Mammary epithelial cell (primary cell): ENCODE measurements at regions of chr5 and their contacts with region 1.

Region 1: DNA sequence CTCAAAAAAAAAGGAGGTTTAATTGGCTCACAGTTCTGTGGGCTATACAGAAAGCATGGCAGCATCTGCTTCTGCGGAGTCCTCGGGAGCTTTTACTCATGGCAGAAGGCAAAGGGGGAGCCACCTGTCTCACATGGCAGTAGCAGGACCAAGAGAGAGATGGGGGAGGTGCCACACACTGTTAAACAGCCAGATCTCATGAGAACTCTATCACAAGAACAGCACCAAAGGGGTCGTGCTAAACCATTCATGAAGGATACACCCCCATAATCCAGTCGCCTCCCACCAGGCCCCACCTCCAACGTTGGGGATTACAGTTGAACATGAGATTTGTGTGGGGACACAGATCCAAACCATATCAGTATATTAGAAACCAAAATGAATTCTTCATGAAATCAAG is 28.3 kb upstream of the CXXC5 start:
- DNase-seq: no peak
- H3K4me3 ChIP-seq: no peak overlapping the region
- H3K27ac ChIP-seq: no peak overlapping the region
- H3K4me1 ChIP-seq: no peaks in the 10 kb centered on the region
- H3K27me3 ChIP-seq: no peaks in the 10 kb centered on the region
- CTCF ChIP-seq: no peak

Region 2: DNA sequence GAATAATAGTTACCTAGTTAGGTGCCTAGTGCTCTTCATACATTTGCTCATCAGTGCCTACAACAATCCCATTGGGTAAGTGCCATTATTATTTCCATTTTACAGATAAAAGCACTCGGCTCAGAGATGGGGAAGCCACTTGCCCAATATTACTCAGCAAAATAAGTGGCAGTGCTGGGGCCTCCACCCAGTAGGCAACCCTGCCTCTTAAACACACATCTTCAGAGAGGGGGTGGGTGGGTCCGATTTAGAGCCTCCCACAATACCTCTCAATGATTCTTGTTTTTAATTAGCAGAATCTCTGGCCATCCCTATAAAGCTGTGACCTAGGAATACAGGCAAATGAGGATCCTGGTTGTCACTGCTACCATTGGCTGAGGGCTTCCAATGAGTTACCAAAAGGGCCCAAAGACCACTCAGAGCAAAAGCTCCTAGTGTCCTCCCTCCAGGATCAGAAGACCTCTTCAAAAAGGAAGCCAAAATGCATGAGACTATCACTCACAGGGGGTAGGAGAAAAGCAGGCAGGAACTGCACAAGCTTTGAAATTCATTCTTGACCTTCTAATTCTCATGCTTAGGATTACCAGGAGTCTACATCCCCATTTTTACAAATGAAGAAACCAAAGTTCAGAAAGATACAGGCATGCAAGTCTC is 94.8 kb before region 1 on chr5:
- CTCF ChIA-PET with region 1: no interaction called
- dilution Hi-C with region 1: loop called (anchors 10 kb)
- in situ Hi-C with region 1: no loop called
- intact Hi-C with region 1: no loop called
- DNase-seq: no peak
- H3K4me3 ChIP-seq: no peak overlapping the region
- H3K27ac ChIP-seq: no peak overlapping the region
- H3K4me1 ChIP-seq: no peaks in the 10 kb centered on the region
- H3K27me3 ChIP-seq: no peaks in the 10 kb centered on the region
- CTCF ChIP-seq: no peak

Region 3: GRCh38 chr5:139690064-139690802 is 70.4 kb after region 1 on chr5:
- CTCF ChIA-PET with region 1: no interaction called
- dilution Hi-C with region 1: no loop called
- in situ Hi-C with region 1: no loop called
- intact Hi-C with region 1: no loop called
- DNase-seq: peak; percentile 28
- H3K4me3 ChIP-seq: no peak overlapping the region
- H3K27ac ChIP-seq: no peak overlapping the region
- H3K4me1 ChIP-seq: peaks cover under 1% of the 10 kb centered on the region
- H3K27me3 ChIP-seq: no peaks in the 10 kb centered on the region
- CTCF ChIP-seq: peak; percentile 59 to 64